ENCODE measurements at regions of chr12 and their contacts with region 1.

Region 1: DNA sequence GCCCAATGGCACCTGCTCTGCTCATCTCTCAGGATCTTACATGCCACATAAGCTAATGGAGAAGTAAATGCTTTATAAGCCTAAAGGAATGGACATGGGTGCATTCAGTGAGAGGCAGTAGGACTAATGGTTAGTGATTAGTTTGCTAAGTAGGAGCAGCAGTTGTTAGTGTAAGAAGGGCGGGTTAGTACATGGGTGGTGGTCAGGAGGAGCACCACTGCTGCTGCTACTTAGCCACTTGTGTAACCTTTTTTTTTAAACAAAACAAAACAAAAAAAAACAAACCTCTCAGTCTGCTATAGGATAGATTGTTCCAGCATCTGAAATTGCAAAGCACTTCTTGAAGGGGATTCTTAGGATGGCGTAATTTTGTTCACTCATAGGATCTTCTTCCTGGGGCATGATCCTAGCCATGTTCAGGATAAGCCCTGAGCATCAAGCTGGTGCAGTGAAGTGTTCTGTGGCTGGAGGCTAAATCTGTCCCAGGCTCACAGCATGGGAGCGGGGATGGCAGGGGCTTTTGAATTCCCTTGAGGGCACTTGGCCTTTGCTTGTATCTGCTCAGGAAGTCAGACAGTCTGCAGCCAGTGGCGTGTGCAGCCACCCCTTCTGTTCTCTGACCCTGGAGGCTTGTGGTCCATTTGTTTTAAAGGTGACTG is 63.6 kb downstream of the CHST11 start:
- DNase-seq: no peak
- ATAC-seq: peak in 1 of 3 donors; percentile 16
- H3K4me3 ChIP-seq: no peak overlapping the region
- H3K4me3 Mint-ChIP-seq: peak overlapping the region; percentile 40
- H3K27ac ChIP-seq: no peak overlapping the region
- H3K27ac Mint-ChIP-seq: peak overlapping the region; percentile 87 to 90
- H3K4me1 ChIP-seq: peaks cover 37% of the 10 kb centered on the region
- H3K4me1 Mint-ChIP-seq: peaks cover 95 to 98% of the 10 kb centered on the region in 2 donors
- H3K27me3 ChIP-seq: no peaks in the 10 kb centered on the region
- H3K27me3 Mint-ChIP-seq: no peaks in the 10 kb centered on the region
- CTCF ChIP-seq: no peak

Region 2: DNA sequence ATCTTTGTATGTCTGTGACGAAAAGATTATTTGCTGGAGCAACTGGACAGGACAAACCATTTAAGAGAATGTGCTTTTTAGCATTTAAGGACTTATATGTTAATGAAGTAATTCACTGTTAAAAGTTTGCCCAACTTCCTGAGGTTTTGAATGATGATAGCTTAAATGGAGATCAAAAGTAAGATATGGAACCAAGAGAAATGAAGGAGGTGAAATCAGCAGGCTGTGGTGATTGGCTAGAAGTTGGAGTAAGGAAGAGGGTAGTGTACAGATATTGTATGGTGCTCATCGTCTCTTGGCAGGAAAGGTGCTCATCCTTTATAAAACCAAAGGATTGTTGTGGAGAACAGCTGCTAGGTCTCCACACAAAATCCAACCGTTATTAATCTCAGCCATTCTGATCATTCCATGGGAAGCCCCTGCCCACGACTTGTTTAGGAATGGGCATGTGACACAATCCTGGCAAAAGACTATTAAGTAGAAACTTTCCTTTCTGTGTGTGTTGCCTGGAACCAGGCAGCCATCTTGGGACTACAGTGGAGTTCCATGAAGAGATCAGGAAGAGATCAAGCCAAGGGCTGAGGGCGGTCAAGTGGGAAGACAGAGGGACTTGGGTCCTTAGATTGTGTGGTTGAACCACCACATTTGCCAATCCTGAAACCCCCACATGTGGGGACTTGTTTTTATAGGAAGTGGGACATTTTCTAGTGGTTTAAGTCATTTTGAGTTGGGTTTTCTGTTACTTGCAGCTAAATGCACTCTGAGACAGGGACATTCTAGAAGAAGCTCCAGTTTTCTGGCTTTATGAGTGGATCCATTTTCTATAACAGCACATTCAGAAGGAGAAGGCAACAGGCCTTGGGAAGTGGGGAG is 120.4 kb before region 1 on chr12:
- intact Hi-C with region 1: no loop called
- DNase-seq: no peak
- ATAC-seq: no peak
- H3K4me3 ChIP-seq: no peak overlapping the region
- H3K4me3 Mint-ChIP-seq: no peak overlapping the region
- H3K27ac ChIP-seq: no peak overlapping the region
- H3K27ac Mint-ChIP-seq: no peak overlapping the region
- H3K4me1 ChIP-seq: peaks cover 3% of the 10 kb centered on the region
- H3K4me1 Mint-ChIP-seq: peaks cover 13 to 15% of the 10 kb centered on the region in 2 donors
- H3K27me3 ChIP-seq: no peaks in the 10 kb centered on the region
- H3K27me3 Mint-ChIP-seq: peaks cover 11 to 17% of the 10 kb centered on the region in 2 donors
- CTCF ChIP-seq: no peak

Region 3: DNA sequence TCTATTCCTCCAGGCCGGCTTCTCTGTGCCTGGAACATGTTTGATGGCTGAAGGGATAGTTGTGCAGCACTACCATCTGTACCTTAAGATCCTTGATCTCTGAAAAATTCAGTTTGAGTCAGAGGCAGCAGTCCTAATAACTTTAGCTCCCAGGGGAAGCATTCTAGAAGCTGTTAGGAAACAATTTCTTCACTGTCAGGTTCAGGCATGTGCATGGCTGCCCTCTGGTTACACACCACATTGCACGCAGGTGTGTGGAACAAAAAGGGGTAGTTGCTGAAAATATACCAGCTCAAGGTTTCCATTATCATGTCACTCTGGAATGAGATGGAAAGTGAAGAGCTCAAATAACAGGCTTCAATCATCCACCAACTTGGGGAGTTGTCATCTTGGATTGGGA is 16.5 kb after region 1 on chr12:
- intact Hi-C with region 1: loop called (anchors 2 kb)
- DNase-seq: no peak
- ATAC-seq: no peak
- H3K4me3 ChIP-seq: no peak overlapping the region
- H3K4me3 Mint-ChIP-seq: no peak overlapping the region
- H3K27ac ChIP-seq: no peak overlapping the region
- H3K27ac Mint-ChIP-seq: peak overlapping the region; percentile 1 to 7
- H3K4me1 ChIP-seq: peaks cover 15% of the 10 kb centered on the region
- H3K4me1 Mint-ChIP-seq: peaks cover 89 to 93% of the 10 kb centered on the region in 2 donors
- H3K27me3 ChIP-seq: no peaks in the 10 kb centered on the region
- H3K27me3 Mint-ChIP-seq: no peaks in the 10 kb centered on the region
- CTCF ChIP-seq: no peak

Region 4: DNA sequence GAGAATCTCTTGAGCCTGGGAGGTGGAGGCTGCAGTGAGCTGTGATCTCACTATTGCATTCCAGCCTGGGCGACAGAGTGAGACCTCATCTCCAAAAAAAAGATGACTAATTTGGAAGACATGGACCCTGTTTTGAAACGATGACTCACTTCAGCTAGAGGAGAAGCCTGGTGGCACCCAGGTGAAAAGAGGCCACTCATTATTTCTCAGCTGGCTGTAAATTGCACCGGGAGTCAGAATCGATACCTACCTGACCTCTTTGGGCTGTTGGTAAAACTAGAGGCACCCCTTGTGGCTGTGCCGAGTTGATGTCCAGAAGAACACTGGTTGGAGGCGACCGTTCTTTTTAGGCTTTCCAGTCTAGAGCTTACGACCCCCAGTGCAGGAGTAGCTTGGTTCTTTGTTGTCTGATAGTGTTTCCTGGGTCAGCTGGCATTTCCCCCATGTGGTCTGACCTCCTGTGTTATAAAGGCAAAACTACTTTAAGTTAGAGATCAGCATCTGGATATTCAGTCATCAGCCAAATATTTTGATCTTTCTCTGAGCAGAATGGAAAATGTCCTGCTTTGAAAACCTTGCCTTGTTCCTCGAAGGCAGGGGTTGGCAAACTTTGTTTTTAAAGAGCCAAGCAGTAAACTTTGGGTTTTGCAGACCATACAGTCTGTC is 29.6 kb after region 1 on chr12:
- intact Hi-C with region 1: loop called (anchors 1 kb)
- DNase-seq: no peak
- ATAC-seq: no peak
- H3K4me3 ChIP-seq: no peak overlapping the region
- H3K4me3 Mint-ChIP-seq: no peak overlapping the region
- H3K27ac ChIP-seq: no peak overlapping the region
- H3K27ac Mint-ChIP-seq: peak overlapping the region in 1 of 2 donors; percentile 84
- H3K4me1 ChIP-seq: peaks cover 64% of the 10 kb centered on the region
- H3K4me1 Mint-ChIP-seq: peaks cover 92 to 93% of the 10 kb centered on the region in 2 donors
- H3K27me3 ChIP-seq: no peaks in the 10 kb centered on the region
- H3K27me3 Mint-ChIP-seq: no peaks in the 10 kb centered on the region
- CTCF ChIP-seq: no peak

Region 5: GRCh38 chr12:104695453-104696148 is 175.2 kb after region 1 on chr12:
- intact Hi-C with region 1: loop called (anchors 5 kb)
- DNase-seq: peak; percentile 63 to 86
- ATAC-seq: peak; percentile 83 to 87 (median 86)
- H3K4me3 ChIP-seq: no peak overlapping the region
- H3K4me3 Mint-ChIP-seq: peak overlapping the region; percentile 40
- H3K27ac ChIP-seq: no peak overlapping the region
- H3K27ac Mint-ChIP-seq: peak overlapping the region; percentile 75 to 80
- H3K4me1 ChIP-seq: peaks cover 59% of the 10 kb centered on the region
- H3K4me1 Mint-ChIP-seq: peaks cover 86% of the 10 kb centered on the region in 2 donors
- H3K27me3 ChIP-seq: no peaks in the 10 kb centered on the region
- H3K27me3 Mint-ChIP-seq: no peaks in the 10 kb centered on the region
- CTCF ChIP-seq: no peak